Naive thymus-derived CD4-positive, alpha-beta T cell (primary cell): ENCODE measurements at regions of chr9 and their contacts with region 1.

Region 1: DNA sequence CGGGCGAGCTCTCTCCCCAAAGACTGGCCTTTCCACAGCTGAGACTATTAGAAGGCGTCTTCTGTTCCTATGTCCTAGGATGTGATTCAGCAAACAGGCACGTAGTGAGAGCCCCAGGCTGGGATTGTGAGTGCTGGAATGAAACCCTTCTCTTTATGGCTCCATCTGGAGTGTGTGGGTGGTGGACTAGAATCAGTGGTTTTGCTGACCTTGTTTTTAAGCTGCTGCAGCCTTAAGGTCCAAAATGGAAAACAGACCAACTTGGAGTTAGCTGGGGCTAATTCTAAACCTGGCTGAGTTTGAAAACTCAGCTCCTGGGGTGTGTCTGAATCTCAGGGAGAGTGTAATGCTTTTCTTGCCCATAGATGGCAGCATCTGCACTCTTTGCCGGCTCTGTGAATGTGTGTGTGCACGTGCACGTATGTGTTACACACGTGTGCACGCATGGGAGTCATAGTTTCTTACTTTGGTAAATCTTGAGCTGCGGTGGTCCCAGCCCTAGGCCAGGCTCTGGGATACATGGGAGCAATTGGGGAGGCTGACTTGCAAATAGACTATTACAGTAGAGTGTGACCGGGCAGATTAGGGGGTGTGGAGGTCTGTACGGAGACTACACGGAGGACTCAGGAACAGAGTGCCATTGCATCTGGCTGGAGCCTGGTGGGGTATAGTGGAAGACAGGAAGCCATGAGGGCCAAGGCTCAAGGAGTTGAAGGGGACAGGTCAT is 10.7 kb downstream of the GSN start:
- DNase-seq: peak in 6 of 9 donors; percentile 19 to 41 (median 26)
- ATAC-seq: peak; percentile 87
- H3K4me3 ChIP-seq: no peak overlapping the region
- H3K4me3 Mint-ChIP-seq: no peak overlapping the region
- H3K27ac ChIP-seq: no peak overlapping the region
- H3K27ac Mint-ChIP-seq: peak overlapping the region in 1 of 9 donors; percentile 14
- H3K4me1 ChIP-seq: no peaks in the 10 kb centered on the region
- H3K4me1 Mint-ChIP-seq: peaks cover 0 to 15% (median 4%) of the 10 kb centered on the region in 7 donors
- H3K27me3 ChIP-seq: no peaks in the 10 kb centered on the region
- H3K27me3 Mint-ChIP-seq: no peaks in the 10 kb centered on the region

Region 2: GRCh38 chr9:121185178-121185745 is 93.4 kb before region 1 on chr9:
- CTCF ChIA-PET with region 1: no interaction called
- POLR2A ChIA-PET with region 1: no interaction called
- intact Hi-C with region 1: no loop called
- DNase-seq: no peak
- ATAC-seq: peak; percentile 55
- H3K4me3 ChIP-seq: no peak overlapping the region
- H3K4me3 Mint-ChIP-seq: peak overlapping the region in 4 of 10 donors; percentile 5 to 40 (median 30)
- H3K27ac ChIP-seq: peak overlapping the region; percentile 45
- H3K27ac Mint-ChIP-seq: peak overlapping the region in 8 of 9 donors; percentile 36 to 93 (median 86)
- H3K4me1 ChIP-seq: peaks cover 17% of the 10 kb centered on the region in 2 donors
- H3K4me1 Mint-ChIP-seq: peaks cover 27 to 81% (median 70%) of the 10 kb centered on the region in 7 donors
- H3K27me3 ChIP-seq: no peaks in the 10 kb centered on the region
- H3K27me3 Mint-ChIP-seq: no peaks in the 10 kb centered on the region

Region 3: DNA sequence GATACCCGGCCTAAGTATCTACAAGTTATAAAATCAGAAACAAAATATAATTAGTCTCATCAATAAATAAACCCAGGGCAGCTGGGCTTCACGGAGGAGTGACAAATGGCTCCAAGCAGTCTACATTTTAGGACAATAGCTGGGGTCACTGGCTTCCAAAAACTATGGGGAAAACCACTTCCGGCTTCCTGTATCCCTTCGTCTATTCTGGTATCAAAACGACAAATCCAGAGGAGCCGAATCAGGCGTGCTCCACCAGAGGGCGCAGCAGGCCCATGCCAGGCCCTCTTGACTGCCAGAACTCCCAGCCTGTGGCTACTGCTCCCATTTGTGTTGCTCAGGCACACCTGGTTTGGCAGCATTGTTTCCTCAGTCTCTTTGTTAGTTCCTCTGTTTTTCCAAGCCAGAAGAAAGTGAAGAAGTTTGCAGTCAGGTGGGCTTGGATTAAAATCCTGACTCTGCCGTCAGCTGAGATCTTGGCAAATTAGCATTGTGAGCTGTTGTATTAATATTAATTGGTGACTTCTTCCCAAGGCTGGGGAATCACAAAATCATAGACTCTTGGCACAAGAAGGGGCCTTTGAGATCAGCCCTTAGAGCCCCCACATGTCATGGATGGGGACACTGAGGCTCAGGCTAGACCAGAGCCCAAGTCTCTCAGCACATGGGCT is 65.4 kb before region 1 on chr9:
- CTCF ChIA-PET with region 1: interaction called, 5 read pairs
- POLR2A ChIA-PET with region 1: no interaction called
- intact Hi-C with region 1: loop called in 1 of 2 experiments (anchors 5 kb)
- DNase-seq: peak; percentile 19 to 69 (median 51)
- ATAC-seq: peak; percentile 87
- H3K4me3 ChIP-seq: no peak overlapping the region
- H3K4me3 Mint-ChIP-seq: no peak overlapping the region
- H3K27ac ChIP-seq: no peak overlapping the region
- H3K27ac Mint-ChIP-seq: peak overlapping the region in 4 of 9 donors; percentile 7 to 49 (median 19)
- H3K4me1 ChIP-seq: no peaks in the 10 kb centered on the region
- H3K4me1 Mint-ChIP-seq: peaks cover 0 to 20% (median 11%) of the 10 kb centered on the region in 7 donors
- H3K27me3 ChIP-seq: no peaks in the 10 kb centered on the region
- H3K27me3 Mint-ChIP-seq: no peaks in the 10 kb centered on the region

Region 4: DNA sequence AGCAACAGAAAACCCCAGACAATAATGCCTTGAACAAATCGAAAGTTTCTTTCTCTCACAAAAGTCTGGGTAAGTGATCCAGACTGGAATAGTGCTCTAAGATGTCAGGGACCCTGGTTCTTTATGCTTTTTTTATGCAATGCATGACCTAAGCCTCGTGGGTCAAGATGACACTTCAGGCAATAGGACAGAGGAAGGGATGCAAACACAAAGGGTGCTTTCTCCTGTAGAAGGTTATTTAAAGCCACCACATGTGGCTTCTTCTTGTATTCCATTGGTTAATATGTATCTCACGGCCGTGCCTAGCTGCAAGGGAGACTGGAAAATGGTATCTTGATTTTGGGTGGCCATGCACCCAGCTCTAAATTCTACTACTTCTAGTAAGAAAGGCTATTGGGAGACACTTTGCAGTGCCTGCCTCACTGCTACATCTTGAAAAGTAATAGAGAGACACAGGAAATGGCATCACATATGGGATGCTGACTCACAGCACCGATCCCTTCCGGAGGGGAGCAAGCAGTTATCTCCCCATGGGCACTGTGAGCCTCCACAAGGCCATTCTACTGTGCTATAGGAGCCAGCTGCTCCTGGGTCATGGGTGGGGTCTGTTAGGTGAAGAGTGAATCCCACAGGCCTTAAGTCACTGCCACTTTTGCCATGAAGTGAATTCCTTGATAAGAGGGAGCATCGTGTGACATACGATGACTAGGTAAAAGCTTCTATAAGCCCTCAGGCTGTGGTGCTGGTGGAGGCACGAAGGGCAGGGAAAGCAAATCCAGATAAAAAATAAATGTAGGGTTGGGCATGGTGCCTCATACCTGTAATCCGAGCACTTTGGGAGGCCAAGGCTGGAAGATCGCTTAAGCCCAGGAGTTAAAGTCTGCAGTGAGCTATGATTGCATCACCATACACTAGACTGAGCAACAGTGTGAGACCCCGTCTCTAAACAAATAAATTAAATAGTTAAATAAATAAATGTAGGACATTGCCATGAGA is 44.5 kb before region 1 on chr9:
- CTCF ChIA-PET with region 1: no interaction called
- POLR2A ChIA-PET with region 1: no interaction called
- intact Hi-C with region 1: no loop called
- DNase-seq: no peak
- ATAC-seq: peak; percentile 76
- H3K4me3 ChIP-seq: no peak overlapping the region
- H3K4me3 Mint-ChIP-seq: no peak overlapping the region
- H3K27ac ChIP-seq: no peak overlapping the region
- H3K27ac Mint-ChIP-seq: no peak overlapping the region
- H3K4me1 ChIP-seq: no peaks in the 10 kb centered on the region
- H3K4me1 Mint-ChIP-seq: peaks cover 0 to 3% (median 0%) of the 10 kb centered on the region in 7 donors
- H3K27me3 ChIP-seq: no peaks in the 10 kb centered on the region
- H3K27me3 Mint-ChIP-seq: peaks cover 0 to 5% (median 0%) of the 10 kb centered on the region in 5 donors